ENCODE measurements at regions of chr14 and their contacts with region 1.

Region 1: GRCh38 chr14:73886449-73887317 is at the start of gene ZNF410:
- DNase-seq: peak; percentile 97
- H3K4me3 Mint-ChIP-seq: peak within 1 kb of the TSS; percentile 82
- H3K27ac Mint-ChIP-seq: peak within 1 kb of the TSS; percentile 93
- H3K4me1 Mint-ChIP-seq: peaks cover 30% of the 10 kb centered on the region
- H3K27me3 Mint-ChIP-seq: no peaks in the 10 kb centered on the region
- CTCF ChIP-seq: no peak
- total RNA-seq, gene ZNF410: 74.0 and 76.0 TPM in 2 replicates

Region 2: DNA sequence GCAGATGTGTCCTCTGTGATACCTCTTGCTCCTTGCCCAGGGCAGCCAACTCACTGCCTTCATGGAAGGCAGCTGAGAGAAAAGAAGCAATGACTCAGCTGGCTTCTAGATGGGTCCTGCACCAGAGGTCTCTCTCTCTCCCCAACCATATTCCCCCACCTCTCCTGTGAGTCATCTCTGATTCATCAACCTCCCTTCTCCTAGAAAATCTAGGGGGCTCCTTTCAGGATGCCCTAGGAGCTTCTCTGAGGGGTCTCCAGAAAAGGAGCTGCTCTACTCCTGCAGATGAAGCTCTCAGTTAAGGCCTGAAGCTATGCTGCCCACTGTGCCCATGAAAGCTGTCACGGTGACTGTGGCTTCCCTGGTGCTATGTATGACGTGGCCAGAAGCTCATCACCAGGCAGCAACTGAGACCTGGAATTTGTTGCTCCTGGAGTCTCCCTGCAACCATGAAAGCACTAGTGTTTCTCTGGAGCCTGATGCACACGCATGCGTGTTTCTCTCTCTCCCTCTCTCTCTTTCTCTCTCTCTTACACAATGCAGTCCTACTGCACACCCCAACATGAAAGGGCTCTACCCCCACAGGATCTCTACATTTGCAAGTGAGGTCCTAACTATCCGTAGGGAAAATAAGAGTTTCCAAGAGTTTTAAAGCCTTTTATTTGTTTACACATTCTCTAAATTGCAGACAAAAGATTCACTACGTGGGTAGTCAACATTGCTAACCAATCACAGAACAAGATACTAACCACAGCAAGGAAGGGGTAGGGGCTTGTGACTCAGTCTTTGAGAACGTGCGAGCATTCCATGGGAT is 1278.1 kb before region 1 on chr14:
- CTCF ChIA-PET with region 1: no interaction called
- POLR2A ChIA-PET with region 1: no interaction called
- intact Hi-C with region 1: no loop called
- DNase-seq: peak; percentile 90
- H3K4me3 Mint-ChIP-seq: no peak overlapping the region
- H3K27ac Mint-ChIP-seq: peak overlapping the region; percentile 61
- H3K4me1 Mint-ChIP-seq: peaks cover 14% of the 10 kb centered on the region
- H3K27me3 Mint-ChIP-seq: no peaks in the 10 kb centered on the region
- CTCF ChIP-seq: no peak

Region 3: DNA sequence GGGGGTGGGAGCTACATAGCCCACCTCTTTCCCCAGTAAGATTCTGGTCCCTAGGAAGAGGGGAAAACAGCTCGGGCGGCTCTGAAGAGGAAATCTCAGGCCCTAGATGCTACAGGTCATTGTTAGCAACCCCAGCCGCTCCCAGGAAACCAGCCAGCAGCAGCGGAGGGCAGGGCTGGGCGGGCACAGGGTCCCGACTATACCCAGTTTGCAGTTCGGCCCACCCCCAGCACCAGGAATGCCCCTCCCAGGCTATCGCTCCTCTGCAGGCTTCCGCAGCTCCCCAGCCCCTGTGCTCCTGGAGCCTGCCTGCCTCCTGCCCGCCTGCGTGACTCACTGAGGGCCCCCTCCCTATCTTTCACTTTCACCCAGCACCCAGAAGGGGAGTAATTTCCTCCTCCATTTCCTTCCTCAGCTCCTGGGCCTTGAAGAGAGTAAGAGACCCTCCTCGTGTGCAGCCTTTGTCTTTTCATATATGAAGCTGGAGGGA is 145.3 kb before region 1 on chr14:
- CTCF ChIA-PET with region 1: no interaction called
- POLR2A ChIA-PET with region 1: interaction called, 21 read pairs
- intact Hi-C with region 1: loop called (anchors 5 kb)
- DNase-seq: peak; percentile 84
- H3K4me3 Mint-ChIP-seq: peak overlapping the region; percentile 65
- H3K27ac Mint-ChIP-seq: peak overlapping the region; percentile 92
- H3K4me1 Mint-ChIP-seq: peaks cover 55% of the 10 kb centered on the region
- H3K27me3 Mint-ChIP-seq: no peaks in the 10 kb centered on the region
- CTCF ChIP-seq: no peak

Region 4: DNA sequence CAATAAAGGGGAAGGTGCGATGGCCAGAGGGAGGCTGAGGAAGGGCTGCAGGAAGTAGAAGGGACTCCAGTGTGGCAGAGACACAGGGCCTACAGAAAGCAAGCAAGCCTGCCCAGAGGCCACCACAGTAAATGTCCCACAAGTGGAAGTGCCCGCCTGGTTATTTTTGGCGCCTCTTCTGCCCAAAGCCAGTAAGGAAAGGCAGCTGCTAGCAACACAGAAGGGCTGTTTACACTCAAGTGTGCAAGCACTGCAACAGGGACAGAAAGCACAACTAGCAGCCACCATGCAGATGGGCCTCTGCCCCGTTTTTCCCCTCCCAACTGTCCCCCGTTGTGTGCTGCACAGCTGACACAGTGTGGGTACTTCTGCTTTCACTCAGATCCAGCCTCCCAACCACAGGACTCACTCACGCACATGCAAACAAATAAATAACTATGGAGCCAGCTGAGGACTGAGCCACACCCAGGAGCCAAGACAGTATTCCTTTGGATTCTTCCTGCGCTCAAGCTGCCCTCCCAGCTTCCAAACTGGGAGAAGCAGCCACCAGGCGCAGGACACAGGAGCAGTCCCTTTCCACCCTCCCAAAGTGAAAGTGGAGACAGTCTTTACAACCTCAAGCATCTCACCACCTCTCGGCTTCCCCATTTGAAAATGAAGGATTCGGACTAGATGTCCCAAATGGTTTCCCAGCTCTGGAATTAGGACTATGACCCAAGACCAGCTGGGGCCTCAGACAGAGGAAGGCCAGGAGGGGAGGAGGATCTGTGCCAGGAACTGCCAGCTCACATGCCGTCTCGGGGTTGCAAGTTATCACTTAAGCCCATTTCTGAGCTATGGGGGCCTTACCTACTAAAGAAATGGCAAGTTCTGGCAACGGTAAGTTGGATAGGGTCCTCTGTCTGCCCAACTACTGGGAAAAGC is 132.5 kb before region 1 on chr14:
- CTCF ChIA-PET with region 1: interaction called, 3 read pairs
- POLR2A ChIA-PET with region 1: interaction called, 32 read pairs
- intact Hi-C with region 1: no loop called
- DNase-seq: peak; percentile 48
- H3K4me3 Mint-ChIP-seq: peak overlapping the region; percentile 86
- H3K27ac Mint-ChIP-seq: peak overlapping the region; percentile 89
- H3K4me1 Mint-ChIP-seq: peaks cover 71% of the 10 kb centered on the region
- H3K27me3 Mint-ChIP-seq: no peaks in the 10 kb centered on the region
- CTCF ChIP-seq: no peak

Region 5: DNA sequence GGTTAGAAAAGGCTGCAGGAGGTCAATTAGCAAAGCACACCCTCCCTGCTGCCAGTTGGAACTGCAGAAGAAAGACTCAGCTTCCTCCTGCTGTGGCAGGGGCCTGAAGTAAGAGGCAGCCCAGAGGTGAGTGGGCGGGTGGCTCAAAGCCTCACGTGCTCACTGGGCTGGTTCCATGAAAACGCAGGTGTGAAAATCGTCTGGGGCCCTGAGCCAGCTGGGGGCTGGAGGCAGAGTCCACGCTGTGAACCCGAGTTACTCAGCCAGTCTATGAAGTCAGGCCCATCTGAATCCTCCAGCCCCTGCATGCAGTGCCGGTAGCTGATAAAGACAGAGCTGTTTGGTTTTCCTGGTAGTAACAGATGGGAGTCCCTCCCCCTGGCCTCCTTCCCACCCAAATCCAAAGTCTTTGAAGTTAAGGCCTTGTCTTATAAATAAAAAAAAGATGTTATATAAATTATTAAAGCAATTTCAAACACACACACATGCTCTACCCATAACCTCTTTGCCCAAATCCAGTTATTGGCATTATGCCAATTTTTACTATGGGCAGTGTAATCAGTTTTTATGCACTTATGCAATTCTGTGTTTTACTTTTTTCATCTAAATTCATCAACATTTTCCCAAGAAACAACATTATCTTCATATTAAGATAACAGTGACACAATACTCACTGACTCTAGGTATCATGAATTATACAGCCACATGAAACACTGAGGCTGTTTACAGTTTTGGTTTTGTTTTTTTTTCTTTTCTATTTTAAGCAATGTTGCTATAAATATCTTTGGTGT is 114.6 kb before region 1 on chr14:
- CTCF ChIA-PET with region 1: no interaction called
- POLR2A ChIA-PET with region 1: interaction called, 14 read pairs
- intact Hi-C with region 1: no loop called
- DNase-seq: peak; percentile 83
- H3K4me3 Mint-ChIP-seq: no peak overlapping the region
- H3K27ac Mint-ChIP-seq: peak overlapping the region; percentile 51
- H3K4me1 Mint-ChIP-seq: peaks cover 38% of the 10 kb centered on the region
- H3K27me3 Mint-ChIP-seq: no peaks in the 10 kb centered on the region
- CTCF ChIP-seq: no peak

Region 6: DNA sequence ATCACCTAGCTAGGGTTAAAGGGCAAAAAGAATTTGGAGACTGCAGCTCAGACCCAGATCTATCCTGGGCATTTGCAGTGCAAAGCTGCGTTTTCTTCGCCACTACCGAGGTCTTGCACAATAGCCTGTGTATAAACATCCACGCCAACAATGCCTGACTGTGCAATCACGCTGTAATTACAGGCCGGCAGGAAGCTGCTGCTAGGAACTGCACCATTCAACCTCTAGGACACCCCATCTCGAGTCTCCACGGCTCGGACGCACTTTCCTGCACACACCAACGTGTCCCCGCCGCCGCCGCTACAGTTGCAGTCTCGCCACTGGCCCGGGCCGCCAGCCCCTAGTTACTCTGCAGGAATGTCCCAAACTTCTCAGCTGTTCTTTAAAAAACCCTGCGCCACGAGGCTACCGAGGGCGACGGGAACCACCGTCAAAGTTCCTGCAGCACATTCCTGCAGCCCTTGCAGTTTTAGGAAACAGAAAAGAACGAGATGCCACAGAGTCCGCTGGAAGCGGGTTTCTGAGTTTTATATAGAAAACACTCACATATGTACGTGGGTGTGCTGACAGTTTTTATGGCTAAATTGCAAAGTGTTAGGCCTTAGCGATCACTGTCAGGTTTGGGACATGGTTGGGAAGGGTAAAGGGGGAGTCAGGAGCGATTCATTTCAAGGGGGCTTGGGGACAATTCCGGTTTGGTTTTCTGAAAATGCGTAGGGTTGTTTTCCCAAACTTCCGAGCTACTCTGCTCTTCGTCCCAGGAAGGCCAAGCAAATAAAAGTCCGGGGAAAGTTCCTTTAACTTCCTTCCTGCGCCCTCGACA is 100.6 kb before region 1 on chr14:
- CTCF ChIA-PET with region 1: no interaction called
- POLR2A ChIA-PET with region 1: interaction called, 43 read pairs
- intact Hi-C with region 1: no loop called
- DNase-seq: peak; percentile 93
- H3K4me3 Mint-ChIP-seq: peak overlapping the region; percentile 81
- H3K27ac Mint-ChIP-seq: peak overlapping the region; percentile 78
- H3K4me1 Mint-ChIP-seq: peaks cover 61% of the 10 kb centered on the region
- H3K27me3 Mint-ChIP-seq: no peaks in the 10 kb centered on the region
- CTCF ChIP-seq: no peak

Region 7: DNA sequence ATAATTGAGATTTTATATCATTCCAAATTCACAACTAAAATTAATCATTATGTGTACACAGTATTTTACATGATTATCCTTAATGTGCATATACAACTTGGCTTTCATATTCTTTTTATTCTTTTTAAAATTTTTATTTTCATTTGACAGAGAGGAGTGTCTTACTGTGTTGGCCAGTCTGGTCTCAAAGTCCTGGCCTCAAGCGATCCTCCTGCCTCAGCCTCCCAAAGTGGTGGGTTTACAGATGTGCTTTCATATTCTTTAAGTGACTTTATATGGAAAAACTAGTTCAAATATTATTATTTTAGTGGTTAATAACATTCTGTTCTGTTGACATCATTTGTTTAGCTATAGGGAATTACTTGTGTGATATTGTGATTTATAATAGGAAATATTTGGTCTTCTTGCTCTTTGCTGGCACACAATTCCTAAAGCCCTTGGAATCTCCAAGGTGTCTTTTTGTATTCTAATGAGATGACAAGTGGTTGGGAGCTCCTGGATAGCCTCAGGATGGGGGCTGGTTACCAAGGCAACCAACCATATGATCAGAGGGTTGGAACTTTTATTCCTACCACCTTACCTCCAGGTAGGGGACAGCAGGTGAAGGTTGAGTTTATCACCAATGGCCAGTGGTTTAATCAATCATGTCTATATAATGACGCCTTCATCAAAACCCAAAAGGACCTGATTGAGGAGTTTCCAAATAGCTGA is 16.0 kb before region 1 on chr14:
- CTCF ChIA-PET with region 1: interaction called, 3 read pairs
- POLR2A ChIA-PET with region 1: interaction called, 10 read pairs
- intact Hi-C with region 1: no loop called
- DNase-seq: no peak
- H3K4me3 Mint-ChIP-seq: no peak overlapping the region
- H3K27ac Mint-ChIP-seq: no peak overlapping the region
- H3K4me1 Mint-ChIP-seq: no peaks in the 10 kb centered on the region
- H3K27me3 Mint-ChIP-seq: no peaks in the 10 kb centered on the region
- CTCF ChIP-seq: no peak

Region 8: DNA sequence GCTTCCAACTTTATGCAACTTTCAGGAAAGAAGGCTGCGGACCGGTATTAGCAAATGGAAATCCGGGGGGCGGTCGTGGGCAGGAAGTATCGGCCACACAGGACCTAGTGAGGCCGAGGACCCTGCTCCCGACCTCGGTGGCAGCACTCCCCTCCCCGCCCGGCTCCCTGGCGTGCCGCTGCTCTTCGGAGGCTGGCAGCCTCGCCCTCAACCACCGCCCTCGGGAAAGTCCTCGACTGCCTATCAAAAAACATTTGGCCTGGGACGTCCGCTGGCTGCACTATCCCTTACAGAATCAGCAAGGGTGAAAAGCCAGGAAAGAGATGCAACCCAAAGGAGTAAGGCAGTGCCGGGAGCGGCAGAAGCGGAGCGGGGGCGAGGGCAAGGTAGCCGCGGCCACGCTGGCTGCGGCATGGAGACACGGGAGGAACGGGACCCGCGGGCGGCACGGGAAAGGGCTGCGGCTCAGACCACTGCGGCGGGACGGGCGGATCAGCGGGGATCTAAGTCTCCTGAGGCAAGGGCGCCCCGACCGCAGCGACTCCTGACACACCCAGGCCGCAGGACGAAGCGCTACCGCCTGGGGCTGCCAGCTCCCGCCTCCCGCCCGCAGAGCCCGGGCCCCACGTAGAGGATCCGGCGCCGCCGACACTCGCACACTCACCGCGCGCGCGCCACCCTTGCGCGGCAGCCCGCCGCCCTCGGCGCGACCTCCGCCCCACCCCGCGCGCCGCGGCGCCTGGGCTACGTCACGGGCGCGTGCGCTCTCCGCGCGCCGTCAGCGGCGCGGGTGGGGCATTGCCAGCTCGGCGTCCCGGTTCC is 132.1 kb after region 1 on chr14 and contains the starts of genes BBOF1 and ENTPD5:
- CTCF ChIA-PET with region 1: no interaction called
- POLR2A ChIA-PET with region 1: interaction called, 24 read pairs
- intact Hi-C with region 1: no loop called
- DNase-seq: peak; percentile 78
- H3K4me3 Mint-ChIP-seq: peak within 1 kb of the TSS; percentile 96
- H3K27ac Mint-ChIP-seq: peak within 1 kb of the TSS; percentile 96
- H3K4me1 Mint-ChIP-seq: peaks cover 6% of the 10 kb centered on the region
- H3K27me3 Mint-ChIP-seq: no peaks in the 10 kb centered on the region
- CTCF ChIP-seq: no peak
- total RNA-seq, gene BBOF1: 2.0 and 4.2 TPM in 2 replicates
- total RNA-seq, gene ENTPD5: 13.9 and 15.8 TPM in 2 replicates

Region 9: DNA sequence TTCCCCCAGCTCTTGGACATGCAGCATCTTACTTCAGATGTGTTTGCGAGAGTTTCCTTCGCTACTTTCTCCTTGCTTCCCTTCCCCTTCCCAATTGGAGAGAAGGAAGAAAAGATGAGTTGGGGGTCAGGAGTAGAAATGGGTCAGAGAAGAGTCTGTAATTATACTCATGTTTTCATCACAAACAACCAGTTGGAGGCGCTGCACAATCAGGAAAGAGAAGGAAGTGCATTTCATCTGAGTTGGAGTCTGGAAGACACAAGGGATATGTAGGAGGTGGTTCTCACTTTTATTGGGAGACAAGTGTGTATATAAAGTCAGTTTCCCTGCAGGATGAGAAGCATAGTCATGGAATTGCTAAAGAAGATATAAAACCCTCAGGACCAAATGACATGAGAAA is 321.3 kb after region 1 on chr14:
- CTCF ChIA-PET with region 1: no interaction called
- POLR2A ChIA-PET with region 1: no interaction called
- intact Hi-C with region 1: no loop called
- DNase-seq: no peak
- H3K4me3 Mint-ChIP-seq: no peak overlapping the region
- H3K27ac Mint-ChIP-seq: no peak overlapping the region
- H3K4me1 Mint-ChIP-seq: no peaks in the 10 kb centered on the region
- H3K27me3 Mint-ChIP-seq: no peaks in the 10 kb centered on the region
- CTCF ChIP-seq: no peak

Region 10: GRCh38 chr14:74456684-74457564 is 570.2 kb after region 1 on chr14:
- CTCF ChIA-PET with region 1: no interaction called
- POLR2A ChIA-PET with region 1: no interaction called
- intact Hi-C with region 1: no loop called
- DNase-seq: no peak
- H3K4me3 Mint-ChIP-seq: no peak overlapping the region
- H3K27ac Mint-ChIP-seq: no peak overlapping the region
- H3K4me1 Mint-ChIP-seq: no peaks in the 10 kb centered on the region
- H3K27me3 Mint-ChIP-seq: peaks cover 20% of the 10 kb centered on the region
- CTCF ChIP-seq: no peak

Measured in MCF 10A (cell line).